ENCODE measurements at regions of chr5 and their contacts with region 1.

Region 1: GRCh38 chr5:83473346-83474163 is 2.0 kb downstream of the VCAN start:
- DNase-seq: peak; percentile 96
- H3K4me3 ChIP-seq: peak overlapping the region; percentile 31 to 51 (median 44)
- H3K27ac ChIP-seq: peak overlapping the region; percentile 69 to 76 (median 72)
- H3K4me1 ChIP-seq: peaks cover 0 to 40% (median 33%) of the 10 kb centered on the region in 4 donors
- H3K27me3 ChIP-seq: peaks cover 0 to 87% (median 37%) of the 10 kb centered on the region in 3 donors
- CTCF ChIP-seq: peak in 3 of 4 experiments; percentile 51 to 58 (median 58)
- EP300 ChIP-seq: peak in 1 of 4 donors; percentile 18
- POLR2A ChIP-seq: peak; percentile 15 to 35

Region 2: DNA sequence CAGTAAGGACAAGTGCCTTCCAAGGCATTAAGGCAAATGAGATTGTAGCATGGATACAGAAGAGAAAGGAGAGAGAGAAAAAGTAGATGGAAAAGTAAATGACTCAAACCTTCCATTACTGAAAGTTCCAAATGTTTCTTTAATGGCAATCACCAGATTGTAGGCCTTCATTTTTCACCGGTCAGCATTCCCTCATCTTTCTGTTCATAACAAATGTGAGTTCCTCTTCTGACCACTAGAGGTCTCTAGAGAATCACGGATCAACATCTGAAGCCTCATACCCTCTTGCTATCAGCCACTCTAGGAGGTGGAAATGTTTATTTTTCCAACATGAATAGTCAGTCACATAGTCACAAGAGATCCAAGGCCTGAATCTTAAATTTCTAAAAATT is 1121.8 kb before region 1 on chr5:
- intact Hi-C with region 1: loop called (anchors 5 kb)
- DNase-seq: no peak
- H3K4me3 ChIP-seq: no peak overlapping the region
- H3K27ac ChIP-seq: no peak overlapping the region
- H3K4me1 ChIP-seq: peaks cover 0 to 11% (median 5%) of the 10 kb centered on the region in 4 donors
- H3K27me3 ChIP-seq: no peaks in the 10 kb centered on the region
- CTCF ChIP-seq: peak; percentile 35 to 77 (median 75)
- EP300 ChIP-seq: no peak
- POLR2A ChIP-seq: no peak

Region 3: GRCh38 chr5:83564069-83564749 is 90.7 kb after region 1 on chr5:
- intact Hi-C with region 1: loop called (anchors 5 kb)
- DNase-seq: no peak
- H3K4me3 ChIP-seq: no peak overlapping the region
- H3K27ac ChIP-seq: peak overlapping the region in 1 of 4 donors; percentile 40
- H3K4me1 ChIP-seq: no peaks in the 10 kb centered on the region
- H3K27me3 ChIP-seq: no peaks in the 10 kb centered on the region
- CTCF ChIP-seq: peak; percentile 25 to 69 (median 50)
- EP300 ChIP-seq: no peak
- POLR2A ChIP-seq: no peak